Right ventricle myocardium inferior (tissue), 1 donor: ENCODE measurements at regions of chr15 and their contacts with region 1.

Region 1: GRCh38 chr15:70097337-70098169 is at the start of gene TLE3:
- DNase-seq: peak; percentile 100
- ATAC-seq: peak; percentile 70
- total RNA-seq, gene TLE3: 14.1 TPM

Region 2: DNA sequence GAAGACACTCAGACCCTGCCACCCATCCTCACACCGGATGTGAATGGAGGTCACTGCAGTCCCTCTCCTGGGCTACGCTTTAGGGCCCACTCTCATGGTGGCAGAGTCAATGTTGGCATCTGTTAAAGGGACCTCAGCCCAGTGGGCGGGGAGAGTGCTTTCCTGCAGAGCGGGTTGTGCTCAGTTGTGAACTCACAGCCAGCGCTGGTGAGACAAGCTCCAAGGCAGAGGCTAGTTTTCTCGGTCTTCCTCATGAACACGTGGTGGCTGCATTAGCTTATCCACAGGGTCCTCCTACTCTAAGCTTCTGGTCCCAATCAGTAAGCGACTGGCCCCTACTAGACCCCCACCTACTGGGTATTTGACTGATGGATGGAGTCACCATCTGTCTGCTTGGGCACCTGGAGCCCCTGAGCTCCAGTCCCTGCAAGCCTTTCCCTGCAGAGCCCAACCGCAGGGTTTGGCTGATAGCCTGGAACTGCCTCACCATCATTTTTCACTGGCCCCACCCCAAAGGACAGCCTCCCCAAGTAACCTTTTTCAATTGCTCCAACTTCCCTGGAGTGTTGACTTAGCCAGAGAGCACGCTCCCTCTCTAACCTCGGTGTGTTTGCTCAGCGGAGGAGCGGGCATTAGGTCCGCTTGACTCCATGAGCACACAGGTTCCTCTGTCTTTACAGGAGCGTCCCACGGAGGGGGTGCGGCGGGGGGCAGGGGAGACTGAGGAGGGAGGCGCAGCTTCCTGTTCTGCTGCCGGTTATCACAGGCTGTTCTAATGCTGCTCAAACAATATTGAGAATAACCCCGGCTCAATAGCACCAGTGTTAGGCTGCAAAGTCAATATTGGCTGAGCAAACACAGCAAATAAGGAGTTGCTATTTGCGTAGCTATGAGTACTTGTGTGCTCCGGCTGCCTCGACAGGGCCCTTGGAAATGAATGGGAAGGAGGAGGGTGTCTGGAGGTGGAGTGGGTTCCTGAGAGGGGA is 503.3 kb before region 1 on chr15:
- intact Hi-C with region 1: loop called (anchors 2 kb)
- DNase-seq: no peak
- ATAC-seq: peak; percentile 48

Region 3: GRCh38 chr15:69919816-69920215 is 177.7 kb before region 1 on chr15:
- intact Hi-C with region 1: no loop called
- DNase-seq: no peak
- ATAC-seq: no peak

Region 4: DNA sequence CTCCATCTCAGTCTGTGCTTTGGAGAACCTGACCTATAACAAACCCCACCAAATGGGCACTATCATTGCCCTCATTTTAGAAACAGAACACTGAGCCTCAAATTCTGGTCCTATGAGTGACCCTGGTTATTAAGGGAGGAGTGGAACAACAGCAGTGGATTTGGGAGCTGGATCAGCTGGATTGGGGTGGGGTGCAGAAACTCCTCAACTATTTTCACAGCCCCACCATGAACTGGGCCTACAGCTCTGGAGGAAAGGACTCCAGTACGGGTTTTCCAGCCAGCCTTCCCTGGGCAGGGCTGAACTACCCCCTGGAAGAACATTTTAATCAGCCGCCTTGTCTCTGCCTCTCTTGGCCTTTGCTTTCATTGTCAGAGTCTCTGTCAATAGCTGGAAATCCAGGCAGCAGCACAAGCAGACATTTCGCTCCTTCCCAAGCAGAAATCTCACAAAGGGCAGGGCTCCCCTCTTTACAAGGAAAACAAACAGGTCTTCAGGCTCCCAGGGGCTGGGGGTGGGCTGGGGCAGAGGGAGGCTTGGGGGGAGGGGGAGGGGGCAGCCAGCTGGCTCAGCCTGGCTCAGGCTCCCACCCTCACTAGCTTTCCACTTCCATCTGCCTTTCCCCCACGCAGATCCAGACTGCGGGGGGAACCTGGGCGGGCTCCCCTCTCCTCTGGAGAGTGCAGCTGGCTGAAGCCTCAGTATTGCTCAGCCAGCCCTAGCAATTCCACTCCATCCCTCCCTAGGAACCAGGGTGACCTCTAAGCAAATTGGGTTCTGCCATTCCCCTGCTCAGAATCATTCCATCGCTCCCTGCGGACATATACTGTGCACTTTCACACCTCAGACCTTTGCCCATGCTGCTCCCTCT is 13.9 kb after region 1 on chr15:
- intact Hi-C with region 1: loop called (anchors 1 kb)
- DNase-seq: no peak
- ATAC-seq: peak; percentile 92

Region 5: GRCh38 chr15:70121624-70122297 is 24.2 kb after region 1 on chr15:
- intact Hi-C with region 1: no loop called
- DNase-seq: peak; percentile 77
- ATAC-seq: peak; percentile 74

Region 6: DNA sequence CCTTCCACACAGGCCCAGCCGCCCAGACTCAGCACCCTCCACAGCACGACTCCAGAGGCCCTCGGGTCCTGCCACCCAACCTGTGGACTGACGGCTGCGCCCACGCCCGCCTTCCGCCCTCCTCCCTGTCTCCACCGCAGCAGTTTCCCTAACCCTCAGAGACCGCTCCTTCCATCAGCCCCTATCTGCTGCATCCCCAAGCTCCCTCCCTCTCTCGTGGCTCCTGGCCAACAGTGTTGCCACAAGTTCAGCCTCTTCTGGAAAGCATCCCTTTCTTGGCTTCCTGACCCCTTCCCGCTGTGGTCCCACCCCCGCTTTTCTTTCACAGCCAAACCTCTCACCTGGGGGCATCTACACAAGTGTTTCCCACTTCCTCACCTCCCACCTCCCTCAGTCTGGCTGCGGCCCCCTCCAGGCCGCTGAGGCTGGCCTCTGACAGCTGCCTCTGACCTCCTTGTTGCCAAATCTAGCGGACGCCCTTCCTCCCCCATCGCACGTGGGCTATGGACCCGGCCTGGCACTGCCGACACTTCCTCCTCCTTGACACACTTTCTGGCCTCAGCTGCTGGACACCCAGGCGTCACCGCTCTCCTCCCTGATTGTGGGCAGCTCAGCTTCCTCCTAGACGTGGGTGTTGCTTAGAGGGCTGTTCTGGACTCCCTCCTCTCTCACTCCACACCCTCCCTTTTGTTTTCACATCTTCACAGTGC is 169.0 kb after region 1 on chr15:
- intact Hi-C with region 1: loop called (anchors 5 kb)
- DNase-seq: peak; percentile 91
- ATAC-seq: peak; percentile 59